ENCODE measurements at regions of chr9 and their contacts with region 1.

Region 1: GRCh38 chr9:93003552-93004407 is 54.7 kb upstream of the SUSD3 start:
- DNase-seq: peak; percentile 45 to 77 (median 66)
- ATAC-seq: peak; percentile 74 to 80
- H3K4me3 Mint-ChIP-seq: peak overlapping the region; percentile 9 to 79 (median 65)
- H3K27ac Mint-ChIP-seq: peak overlapping the region; percentile 80 to 97 (median 92)
- H3K4me1 Mint-ChIP-seq: peaks cover 24 to 67% (median 52%) of the 10 kb centered on the region in 4 donors
- H3K27me3 Mint-ChIP-seq: no peaks in the 10 kb centered on the region

Region 2: DNA sequence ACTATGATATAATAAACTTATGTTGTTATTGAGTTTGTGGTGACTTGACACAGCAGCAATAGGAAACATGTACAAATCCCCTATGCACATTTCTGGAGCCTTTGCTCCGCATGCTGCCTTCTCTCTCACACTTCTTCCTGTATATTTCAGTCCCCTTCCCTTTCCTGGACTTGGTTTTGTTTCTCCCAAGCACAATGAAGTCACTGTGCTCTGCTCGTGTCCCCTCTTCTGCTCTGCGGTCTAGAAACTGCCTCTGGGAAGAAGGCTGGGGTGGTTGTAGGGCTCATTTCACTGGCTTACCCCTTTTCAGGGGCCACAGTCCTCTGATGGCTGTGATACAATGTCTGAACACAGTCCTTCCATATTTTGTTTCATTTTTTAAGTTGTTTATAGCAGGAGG is 72.2 kb before region 1 on chr9:
- POLR2A ChIA-PET with region 1: no interaction called
- DNase-seq: no peak
- ATAC-seq: no peak
- H3K4me3 Mint-ChIP-seq: no peak overlapping the region
- H3K27ac Mint-ChIP-seq: peak overlapping the region in 1 of 10 donors; percentile 60
- H3K4me1 Mint-ChIP-seq: peaks cover 0 to 8% (median under 1%) of the 10 kb centered on the region in 4 donors
- H3K27me3 Mint-ChIP-seq: peaks cover 0 to 5% (median 0%) of the 10 kb centered on the region in 5 donors

Region 3: GRCh38 chr9:92970467-92970923 is 33.3 kb before region 1 on chr9:
- POLR2A ChIA-PET with region 1: interaction called, 77 read pairs
- DNase-seq: no peak
- ATAC-seq: no peak
- H3K4me3 Mint-ChIP-seq: peak overlapping the region; percentile 86 to 97 (median 92)
- H3K27ac Mint-ChIP-seq: peak overlapping the region; percentile 91 to 100 (median 98)
- H3K4me1 Mint-ChIP-seq: peaks cover 45 to 97% (median 85%) of the 10 kb centered on the region in 4 donors
- H3K27me3 Mint-ChIP-seq: no peaks in the 10 kb centered on the region

Region 4: DNA sequence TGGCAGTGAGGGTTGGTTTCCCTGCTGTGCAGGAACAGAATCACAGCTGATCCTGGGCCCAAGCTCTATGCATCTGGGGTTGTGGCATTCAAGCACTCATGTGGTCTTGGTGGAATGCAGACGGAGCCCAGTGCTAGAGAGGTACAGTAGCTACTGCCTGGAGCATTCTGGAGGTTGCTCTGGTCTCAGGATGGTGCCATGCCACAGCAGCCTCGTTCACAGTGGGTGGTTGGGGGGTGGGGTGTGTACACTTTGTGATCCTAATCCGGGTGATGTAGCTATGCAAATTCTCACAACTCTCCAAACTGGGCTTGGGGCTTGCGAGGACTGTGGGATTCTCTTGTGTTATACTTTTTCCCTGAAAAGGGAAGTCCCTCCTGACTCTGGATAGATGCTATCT is 11.2 kb before region 1 on chr9:
- POLR2A ChIA-PET with region 1: interaction called, 18 read pairs
- DNase-seq: no peak
- ATAC-seq: peak; percentile 28 to 29
- H3K4me3 Mint-ChIP-seq: peak overlapping the region in 9 of 10 donors; percentile 26 to 68 (median 49)
- H3K27ac Mint-ChIP-seq: peak overlapping the region; percentile 32 to 94 (median 79)
- H3K4me1 Mint-ChIP-seq: peaks cover 58 to 99% (median 97%) of the 10 kb centered on the region in 4 donors
- H3K27me3 Mint-ChIP-seq: no peaks in the 10 kb centered on the region

Region 5: DNA sequence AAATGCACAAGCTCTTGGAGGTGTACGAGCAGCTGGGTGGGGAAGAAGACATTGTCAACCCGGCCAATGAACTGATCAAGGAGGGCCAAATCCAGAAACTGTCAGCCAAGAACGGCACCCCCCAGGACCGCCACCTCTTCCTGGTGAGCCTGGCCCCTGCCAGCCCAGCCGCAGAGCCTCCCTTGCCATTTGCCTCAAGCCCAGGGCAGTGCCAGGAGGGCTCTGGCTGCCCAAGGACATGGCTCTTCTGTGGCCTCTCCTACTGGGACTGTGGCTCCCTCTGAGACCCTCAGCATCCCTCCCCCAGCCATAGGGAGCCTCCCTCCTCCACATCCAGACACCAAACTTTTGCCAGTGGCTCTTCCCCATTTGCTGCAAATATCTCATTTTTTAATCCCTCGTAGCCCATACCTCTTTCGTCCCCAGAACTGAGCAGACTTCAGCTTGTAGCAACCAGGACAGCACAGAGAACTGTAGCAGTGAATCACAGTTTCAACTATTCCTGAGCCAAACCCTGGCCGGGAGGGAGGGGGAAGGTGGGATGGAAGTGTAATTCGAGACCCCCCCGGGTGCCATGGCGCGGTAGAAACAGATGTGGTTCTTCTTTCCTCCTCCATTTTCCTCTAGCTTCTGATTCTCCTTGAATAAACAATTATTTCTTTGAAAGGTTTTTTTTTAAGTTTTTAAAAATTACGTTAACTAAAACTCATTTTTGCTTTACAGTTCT is 10.2 kb after region 1 on chr9:
- POLR2A ChIA-PET with region 1: interaction called, 28 read pairs
- DNase-seq: peak in 1 of 10 donors; percentile 7
- ATAC-seq: no peak
- H3K4me3 Mint-ChIP-seq: no peak overlapping the region
- H3K27ac Mint-ChIP-seq: peak overlapping the region; percentile 19 to 87 (median 72)
- H3K4me1 Mint-ChIP-seq: peaks cover 5 to 35% (median 17%) of the 10 kb centered on the region in 4 donors
- H3K27me3 Mint-ChIP-seq: no peaks in the 10 kb centered on the region

Region 6: DNA sequence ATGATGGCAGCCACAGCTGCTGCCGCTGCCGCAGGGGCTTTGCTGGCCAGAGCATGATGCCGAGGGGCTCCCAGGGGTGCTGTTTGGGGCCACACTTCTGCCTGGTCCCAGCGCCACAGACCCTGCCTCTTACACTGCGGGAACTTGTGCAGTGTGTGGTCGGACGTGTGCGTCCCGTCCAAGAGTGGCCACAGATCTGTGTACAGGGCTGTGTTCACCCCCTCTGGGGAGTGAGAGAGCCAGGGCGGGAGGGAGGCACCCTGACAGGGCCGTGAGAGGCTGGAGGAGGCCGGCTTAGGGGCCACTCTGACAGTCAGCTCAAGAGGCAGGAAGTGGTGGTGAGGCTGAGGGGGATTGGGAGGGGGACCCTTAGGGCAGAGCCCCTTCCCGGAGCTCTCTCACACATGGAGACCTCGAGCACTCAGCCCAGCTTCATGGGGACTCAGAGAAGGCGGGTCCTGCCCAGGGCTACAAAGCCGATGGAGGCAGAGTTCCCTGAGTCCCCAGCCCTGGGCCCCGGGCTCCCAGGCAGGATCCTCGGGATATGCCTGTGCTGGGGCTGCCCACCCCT is 79.1 kb after region 1 on chr9:
- POLR2A ChIA-PET with region 1: no interaction called
- DNase-seq: peak in 1 of 10 donors; percentile 61
- ATAC-seq: peak; percentile 47 to 53
- H3K4me3 Mint-ChIP-seq: peak overlapping the region in 5 of 10 donors; percentile 10 to 81 (median 41)
- H3K27ac Mint-ChIP-seq: peak overlapping the region; percentile 46 to 96 (median 90)
- H3K4me1 Mint-ChIP-seq: peaks cover 9 to 43% (median 21%) of the 10 kb centered on the region in 4 donors
- H3K27me3 Mint-ChIP-seq: no peaks in the 10 kb centered on the region